Body of pancreas (tissue), 4 donors: ENCODE measurements at regions of chr17 and their contacts with region 1.

Region 1: DNA sequence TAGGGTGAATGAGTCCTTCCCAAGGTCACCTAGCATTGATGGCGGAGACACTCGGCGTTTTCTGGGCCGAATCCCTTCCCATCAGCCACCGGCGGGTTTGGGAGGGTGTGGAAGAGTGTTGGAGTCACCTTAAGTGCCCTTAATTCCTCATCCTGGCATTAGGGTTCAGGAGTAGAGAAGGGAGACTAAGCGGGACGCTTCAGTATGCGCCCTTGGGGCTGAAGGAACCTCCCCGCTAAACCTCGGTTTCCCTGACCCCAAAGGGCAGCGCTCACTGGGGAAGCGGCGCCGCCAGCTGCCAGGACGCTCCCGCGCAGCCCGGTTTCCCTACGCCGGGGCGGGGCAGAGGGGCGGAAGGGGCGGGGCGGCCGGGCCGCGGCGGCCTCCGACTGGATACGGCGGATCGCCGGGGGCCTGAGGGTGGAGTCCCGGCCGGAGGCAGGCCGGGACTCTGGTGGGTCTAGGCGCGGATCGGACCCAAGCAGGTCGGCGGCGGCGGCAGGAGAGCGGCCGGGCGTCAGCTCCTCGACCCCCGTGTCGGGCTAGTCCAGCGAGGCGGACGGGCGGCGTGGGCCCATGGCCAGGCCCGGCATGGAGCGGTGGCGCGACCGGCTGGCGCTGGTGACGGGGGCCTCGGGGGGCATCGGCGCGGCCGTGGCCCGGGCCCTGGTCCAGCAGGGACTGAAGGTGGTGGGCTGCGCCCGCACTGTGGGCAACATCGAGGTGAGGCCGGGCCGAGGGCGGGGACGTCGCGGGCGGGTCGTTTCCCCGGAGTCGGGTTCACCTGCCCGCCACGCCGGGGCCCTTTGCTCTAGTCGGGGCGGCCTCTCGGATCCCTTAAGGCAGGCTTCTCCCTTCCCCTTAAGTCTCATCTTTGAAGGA is at the start of gene DHRS11:
- DNase-seq: peak; percentile 83 to 90 (median 84)
- ATAC-seq: peak; percentile 97
- H3K4me3 ChIP-seq: peak within 1 kb of the TSS; percentile 77 to 91
- H3K27ac ChIP-seq: peak within 1 kb of the TSS; percentile 34 to 72 (median 63)
- H3K4me1 ChIP-seq: peaks cover 25% of the 10 kb centered on the region
- H3K27me3 ChIP-seq: no peaks in the 10 kb centered on the region
- CTCF ChIP-seq: peak in 1 of 7 experiments; percentile 4
- POLR2A ChIP-seq: peak; percentile 25 to 35 (median 34)
- total RNA-seq, gene DHRS11: 7.0 to 16.5 TPM

Region 2: DNA sequence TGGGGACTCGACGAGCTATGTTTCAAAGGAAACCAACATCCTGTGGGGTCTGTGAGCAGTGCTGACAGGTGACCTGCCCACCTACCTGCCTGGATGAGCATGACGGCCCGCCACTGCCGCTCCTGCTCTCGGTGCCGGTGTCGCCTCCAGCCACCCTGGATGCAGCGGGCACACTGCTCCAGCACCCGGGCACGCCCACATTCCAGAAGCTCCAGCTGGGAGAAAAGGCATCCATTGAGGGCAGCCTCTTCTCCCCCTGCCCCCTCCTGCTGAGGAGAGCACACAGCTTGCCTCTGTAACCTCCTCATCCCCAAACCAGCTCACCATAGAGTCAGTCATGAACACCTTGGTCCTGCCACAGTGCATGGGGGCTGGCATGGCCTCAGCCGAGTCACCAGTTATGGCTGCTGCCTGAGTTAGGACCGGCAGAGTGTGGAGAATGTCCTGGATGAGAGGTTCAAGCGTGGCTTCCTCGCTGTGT is 90.9 kb before region 1 on chr17:
- intact Hi-C with region 1: no loop called
- DNase-seq: no peak
- ATAC-seq: no peak
- H3K4me3 ChIP-seq: no peak overlapping the region
- H3K27ac ChIP-seq: no peak overlapping the region
- H3K4me1 ChIP-seq: no peaks in the 10 kb centered on the region
- H3K27me3 ChIP-seq: no peaks in the 10 kb centered on the region
- CTCF ChIP-seq: no peak
- POLR2A ChIP-seq: no peak

Region 3: DNA sequence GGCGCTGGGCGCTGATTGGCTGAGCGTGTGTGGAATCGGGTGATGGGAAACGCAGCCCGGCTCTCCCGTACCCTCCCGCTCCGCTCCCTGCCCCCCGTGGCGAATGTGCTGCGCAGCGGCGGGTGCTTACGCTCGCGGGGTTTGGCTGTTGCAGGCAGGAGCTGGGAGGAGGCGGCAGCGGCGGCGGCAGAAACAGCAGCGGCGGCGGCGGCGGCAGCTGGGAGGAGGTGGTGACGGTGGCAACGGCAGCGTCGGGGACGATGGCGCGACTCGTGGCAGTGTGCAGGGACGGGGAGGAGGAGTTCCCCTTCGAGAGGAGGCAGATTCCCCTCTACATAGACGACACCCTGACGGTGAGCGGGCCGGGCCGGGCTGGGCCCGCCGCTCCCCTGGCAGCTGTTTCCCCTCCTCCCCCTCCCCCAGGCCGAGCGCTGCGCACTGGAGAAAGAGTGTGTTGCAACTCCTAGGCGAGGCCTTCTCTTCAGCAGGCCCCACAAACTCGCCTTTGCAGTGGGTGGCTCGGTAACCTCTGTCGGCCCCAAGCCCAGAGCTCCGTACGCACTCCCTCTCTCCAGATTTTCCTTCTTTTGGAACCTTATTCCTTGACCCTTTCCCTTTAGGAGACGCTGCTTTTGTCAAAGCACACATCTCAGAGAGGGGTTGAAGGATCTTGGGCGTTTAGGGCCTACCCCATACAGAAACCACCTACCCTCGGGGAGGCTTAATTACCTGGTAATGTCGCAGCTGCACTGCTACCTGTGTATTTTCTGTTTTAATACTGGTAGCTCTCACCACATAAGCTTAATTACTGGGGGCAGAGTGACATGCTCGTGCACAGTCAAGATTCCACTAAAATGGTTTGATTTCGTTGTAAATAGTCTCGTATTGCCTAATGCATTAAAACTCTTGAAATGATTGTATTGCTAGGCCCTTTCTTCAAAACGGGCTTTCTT is 45.9 kb before region 1 on chr17:
- intact Hi-C with region 1: loop called (anchors 10 kb)
- DNase-seq: peak; percentile 97 to 98 (median 97)
- ATAC-seq: peak; percentile 92
- H3K4me3 ChIP-seq: peak overlapping the region; percentile 81 to 97
- H3K27ac ChIP-seq: peak overlapping the region; percentile 95 to 100 (median 100)
- H3K4me1 ChIP-seq: peaks cover 39% of the 10 kb centered on the region
- H3K27me3 ChIP-seq: no peaks in the 10 kb centered on the region
- CTCF ChIP-seq: peak in 3 of 7 experiments; percentile 15 to 30 (median 19)
- POLR2A ChIP-seq: peak; percentile 77 to 85 (median 84)

Region 4: DNA sequence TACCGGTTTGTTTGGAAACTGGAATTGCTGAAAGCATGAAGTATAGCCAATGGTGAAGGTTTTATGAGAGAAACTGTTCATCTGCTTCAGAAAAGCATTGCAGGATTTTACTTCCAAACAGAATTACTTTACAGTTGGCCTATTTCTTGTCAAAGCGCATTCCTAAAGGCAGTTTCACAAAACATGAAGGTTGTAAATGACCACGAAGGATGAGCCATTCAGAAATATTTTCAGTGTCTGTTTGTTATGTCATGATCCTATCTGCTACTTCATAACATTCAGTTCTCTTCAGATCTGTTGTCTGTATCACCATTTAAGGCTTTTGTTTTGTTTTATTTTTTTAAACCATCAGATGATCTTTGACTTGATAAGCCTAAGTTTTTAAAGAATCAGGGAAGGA is 402.8 kb after region 1 on chr17:
- intact Hi-C with region 1: no loop called
- DNase-seq: no peak
- ATAC-seq: no peak
- H3K4me3 ChIP-seq: no peak overlapping the region
- H3K27ac ChIP-seq: no peak overlapping the region
- H3K4me1 ChIP-seq: no peaks in the 10 kb centered on the region
- H3K27me3 ChIP-seq: no peaks in the 10 kb centered on the region
- CTCF ChIP-seq: no peak
- POLR2A ChIP-seq: no peak